T-cell (primary cell): ENCODE measurements at regions of chr9 and their contacts with region 1.

Region 1: GRCh38 chr9:114505187-114506081 is at the start of gene WHRN:
- DNase-seq: peak; percentile 63 to 95 (median 88)
- ATAC-seq: peak; percentile 83 to 92 (median 86)
- H3K4me3 ChIP-seq: peak within 1 kb of the TSS; percentile 65 to 71
- H3K4me3 Mint-ChIP-seq: peak within 1 kb of the TSS; percentile 79 to 85 (median 80)
- H3K27ac ChIP-seq: peak within 1 kb of the TSS; percentile 55
- H3K27ac Mint-ChIP-seq: peak within 1 kb of the TSS in 1 of 2 donors; percentile 52
- H3K4me1 ChIP-seq: peaks cover 2 to 28% of the 10 kb centered on the region in 2 experiments
- H3K4me1 Mint-ChIP-seq: peaks cover 18 to 40% (median 40%) of the 10 kb centered on the region in 3 donors
- H3K27me3 ChIP-seq: peaks cover 0 to 18% of the 10 kb centered on the region in 2 experiments
- H3K27me3 Mint-ChIP-seq: peaks cover 20 to 27% of the 10 kb centered on the region in 2 donors
- total RNA-seq, gene WHRN: 11.4 to 46.0 (median 13.0) TPM

Region 2: DNA sequence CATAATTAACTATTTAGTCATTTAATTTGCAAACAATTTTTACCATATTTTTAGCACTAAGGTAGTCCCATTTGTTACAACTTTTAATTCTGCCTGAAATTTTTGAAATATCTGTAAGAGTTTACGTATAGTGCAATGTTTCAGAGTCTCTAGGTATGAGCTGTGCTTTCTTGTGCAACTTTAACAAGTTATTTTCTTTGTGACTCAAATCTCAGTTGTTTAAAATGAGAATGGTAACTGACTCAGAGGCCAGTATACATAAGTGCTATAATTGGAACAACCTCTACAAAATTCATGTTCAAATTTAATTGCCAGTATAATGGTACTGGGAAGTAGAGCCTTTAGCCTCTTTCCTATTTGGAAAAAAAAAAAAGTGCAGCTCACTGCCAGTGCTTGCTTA is 1479.2 kb before region 1 on chr9:
- CTCF ChIA-PET with region 1: no interaction called
- POLR2A ChIA-PET with region 1: no interaction called
- DNase-seq: no peak
- ATAC-seq: no peak
- H3K4me3 ChIP-seq: no peak overlapping the region
- H3K4me3 Mint-ChIP-seq: no peak overlapping the region
- H3K27ac ChIP-seq: no peak overlapping the region
- H3K27ac Mint-ChIP-seq: no peak overlapping the region
- H3K4me1 ChIP-seq: no peaks in the 10 kb centered on the region
- H3K4me1 Mint-ChIP-seq: no peaks in the 10 kb centered on the region
- H3K27me3 ChIP-seq: no peaks in the 10 kb centered on the region
- H3K27me3 Mint-ChIP-seq: peaks cover 1 to 9% of the 10 kb centered on the region in 2 donors

Region 3: GRCh38 chr9:114405294-114406034 is 100.0 kb before region 1 on chr9:
- CTCF ChIA-PET with region 1: interaction called, 3 to 11 read pairs
- POLR2A ChIA-PET with region 1: no interaction called
- DNase-seq: peak; percentile 57 to 91 (median 76)
- ATAC-seq: peak; percentile 93 to 100 (median 97)
- H3K4me3 ChIP-seq: no peak overlapping the region
- H3K4me3 Mint-ChIP-seq: no peak overlapping the region
- H3K27ac ChIP-seq: no peak overlapping the region
- H3K27ac Mint-ChIP-seq: peak overlapping the region; percentile 62 to 68
- H3K4me1 ChIP-seq: peaks cover 0 to 10% of the 10 kb centered on the region in 2 experiments
- H3K4me1 Mint-ChIP-seq: peaks cover 6 to 8% (median 6%) of the 10 kb centered on the region in 3 donors
- H3K27me3 ChIP-seq: no peaks in the 10 kb centered on the region
- H3K27me3 Mint-ChIP-seq: no peaks in the 10 kb centered on the region

Region 4: GRCh38 chr9:114487607-114488300 is 17.7 kb before region 1 on chr9:
- CTCF ChIA-PET with region 1: interaction called, 12 to 14 read pairs
- POLR2A ChIA-PET with region 1: interaction called in 1 of 2 experiments, 3 read pairs
- DNase-seq: peak in 34 of 35 experiments; percentile 10 to 85 (median 44)
- ATAC-seq: peak; percentile 60 to 86 (median 74)
- H3K4me3 ChIP-seq: no peak overlapping the region
- H3K4me3 Mint-ChIP-seq: no peak overlapping the region
- H3K27ac ChIP-seq: peak overlapping the region; percentile 15
- H3K27ac Mint-ChIP-seq: peak overlapping the region; percentile 0 to 7
- H3K4me1 ChIP-seq: peaks cover 0 to 20% of the 10 kb centered on the region in 2 experiments
- H3K4me1 Mint-ChIP-seq: peaks cover 5 to 35% (median 30%) of the 10 kb centered on the region in 3 donors
- H3K27me3 ChIP-seq: no peaks in the 10 kb centered on the region
- H3K27me3 Mint-ChIP-seq: peaks cover 0 to 3% of the 10 kb centered on the region in 2 donors

Region 5: GRCh38 chr9:114606597-114607207 is 101.3 kb after region 1 on chr9:
- CTCF ChIA-PET with region 1: no interaction called
- POLR2A ChIA-PET with region 1: no interaction called
- DNase-seq: no peak
- ATAC-seq: no peak
- H3K4me3 ChIP-seq: no peak overlapping the region
- H3K4me3 Mint-ChIP-seq: no peak overlapping the region
- H3K27ac ChIP-seq: no peak overlapping the region
- H3K27ac Mint-ChIP-seq: no peak overlapping the region
- H3K4me1 ChIP-seq: peaks cover 3 to 11% of the 10 kb centered on the region in 2 experiments
- H3K4me1 Mint-ChIP-seq: peaks cover 13 to 26% (median 14%) of the 10 kb centered on the region in 3 donors
- H3K27me3 ChIP-seq: no peaks in the 10 kb centered on the region
- H3K27me3 Mint-ChIP-seq: no peaks in the 10 kb centered on the region